ENCODE measurements at regions of chr2 and their contacts with region 1.

Region 1: DNA sequence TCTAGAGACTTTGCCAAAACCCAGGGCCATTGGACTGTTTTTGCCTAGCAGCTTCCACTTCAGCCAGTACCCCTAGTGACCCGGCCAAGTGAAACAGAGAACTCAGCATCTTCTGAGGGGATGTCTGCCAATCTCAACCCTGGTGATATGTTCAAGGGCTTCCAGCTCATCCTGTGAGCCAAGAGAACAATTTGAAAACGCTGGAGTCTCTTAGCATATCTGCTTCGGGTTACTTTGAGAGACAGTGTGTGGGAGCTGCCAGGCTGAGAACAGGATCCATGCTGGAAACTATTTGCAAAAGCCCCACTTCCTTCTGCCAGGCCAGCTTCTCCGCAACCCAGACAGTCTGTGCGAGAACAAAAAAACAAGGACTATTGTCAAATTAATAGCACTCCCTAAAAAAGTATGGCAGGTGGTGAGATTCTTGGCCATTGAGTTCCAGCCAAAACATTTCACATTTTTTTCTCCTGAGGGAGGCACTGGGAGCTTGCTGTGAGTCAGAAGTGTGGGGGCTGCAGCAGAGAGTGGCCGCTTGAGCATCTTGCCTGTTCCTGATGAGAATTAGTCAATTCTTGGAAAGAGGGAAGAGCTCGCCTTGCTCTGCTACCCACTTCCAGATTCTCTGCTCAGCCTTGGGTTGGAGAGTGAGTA is 395.6 kb upstream of the TRIB2 start:
- DNase-seq: no peak

Region 2: GRCh38 chr2:11829947-11830707 is 491.0 kb before region 1 on chr2:
- intact Hi-C with region 1: loop called (anchors 5 kb)
- DNase-seq: no peak

Region 3: GRCh38 chr2:11863513-11864328 is 457.4 kb before region 1 on chr2:
- intact Hi-C with region 1: loop called (anchors 10 kb)
- DNase-seq: peak; percentile 92

Region 4: DNA sequence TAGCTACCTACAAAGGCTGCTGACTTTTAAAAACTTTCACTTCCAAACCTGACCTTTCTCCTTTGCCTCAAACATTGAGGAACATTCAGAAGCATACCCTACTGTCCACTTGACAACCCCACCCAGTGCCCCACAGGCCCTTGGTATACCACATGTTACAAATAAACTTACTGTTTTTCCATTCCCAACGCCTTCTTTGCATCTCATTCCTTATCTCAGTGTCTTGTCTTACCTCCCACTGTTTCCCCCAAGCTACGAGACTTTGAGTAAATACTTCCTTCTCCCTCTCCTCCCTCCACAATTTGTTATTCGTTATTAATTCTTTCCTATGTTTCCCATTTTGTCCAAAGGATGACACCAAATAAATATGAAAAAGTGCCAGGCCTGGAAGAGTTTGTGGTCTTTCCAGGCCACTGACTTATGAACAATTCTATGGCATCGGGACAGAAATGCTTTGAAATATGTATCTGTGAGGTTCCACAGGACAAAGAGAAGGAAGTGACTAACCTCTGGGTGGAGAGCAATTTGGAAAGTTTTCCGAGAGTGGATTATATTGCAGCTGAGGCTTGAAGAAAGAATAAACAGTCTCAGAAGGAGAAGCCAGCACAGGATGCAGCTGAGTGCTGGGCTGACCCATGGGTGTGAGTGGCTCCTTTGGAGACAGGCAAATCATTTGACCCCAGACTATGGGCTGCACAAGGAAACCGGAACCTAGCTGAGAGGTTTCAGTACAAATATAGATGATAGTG is 165.6 kb before region 1 on chr2:
- intact Hi-C with region 1: no loop called
- DNase-seq: no peak

Region 5: GRCh38 chr2:12289120-12289802 is 31.9 kb before region 1 on chr2:
- intact Hi-C with region 1: loop called (anchors 2 kb)
- DNase-seq: no peak

Region 6: GRCh38 chr2:12389344-12390045 is 68.4 kb after region 1 on chr2:
- intact Hi-C with region 1: no loop called
- DNase-seq: no peak

Region 7: GRCh38 chr2:12402440-12403139 is 81.5 kb after region 1 on chr2:
- intact Hi-C with region 1: no loop called
- DNase-seq: no peak

Region 8: DNA sequence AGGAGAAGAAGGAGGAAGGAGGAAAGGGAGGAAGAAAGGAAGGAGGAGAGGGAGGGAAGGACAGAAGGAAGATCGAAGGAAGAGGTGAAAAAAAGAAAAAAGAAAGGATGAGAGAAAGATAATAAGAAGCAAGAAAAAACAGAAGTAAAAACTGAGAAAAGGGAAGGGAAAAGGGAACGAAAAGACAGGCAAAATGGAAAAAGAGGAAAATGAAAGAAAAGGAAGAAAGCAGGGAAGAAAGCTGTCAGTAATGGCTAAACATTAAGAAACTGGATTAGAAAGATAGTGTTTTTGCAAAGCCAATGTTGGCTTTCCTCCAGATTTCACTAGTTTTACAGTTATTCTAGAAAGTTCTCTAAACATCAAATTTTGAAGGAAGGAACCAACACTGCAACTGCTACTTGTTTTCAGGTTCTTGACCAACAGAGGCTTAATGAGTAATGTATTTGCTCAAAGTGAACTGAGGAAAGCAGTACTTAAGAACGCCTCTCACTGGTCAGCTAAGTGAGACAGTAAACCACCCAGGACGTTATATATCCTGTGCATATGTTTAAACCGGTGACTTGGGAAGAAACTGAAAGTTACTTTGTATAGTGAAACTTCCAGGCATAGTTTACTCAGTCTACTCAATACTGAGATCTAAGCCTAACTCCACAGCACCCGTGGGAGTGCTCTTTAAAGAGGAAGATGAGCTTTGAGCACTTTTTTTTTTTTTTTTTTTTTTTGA is 109.5 kb after region 1 on chr2:
- intact Hi-C with region 1: no loop called
- DNase-seq: no peak

Region 9: GRCh38 chr2:12534646-12535263 is 213.6 kb after region 1 on chr2:
- intact Hi-C with region 1: loop called (anchors 5 kb)
- DNase-seq: no peak